ENCODE measurements at regions of chr2 and their contacts with region 1.

Region 1: DNA sequence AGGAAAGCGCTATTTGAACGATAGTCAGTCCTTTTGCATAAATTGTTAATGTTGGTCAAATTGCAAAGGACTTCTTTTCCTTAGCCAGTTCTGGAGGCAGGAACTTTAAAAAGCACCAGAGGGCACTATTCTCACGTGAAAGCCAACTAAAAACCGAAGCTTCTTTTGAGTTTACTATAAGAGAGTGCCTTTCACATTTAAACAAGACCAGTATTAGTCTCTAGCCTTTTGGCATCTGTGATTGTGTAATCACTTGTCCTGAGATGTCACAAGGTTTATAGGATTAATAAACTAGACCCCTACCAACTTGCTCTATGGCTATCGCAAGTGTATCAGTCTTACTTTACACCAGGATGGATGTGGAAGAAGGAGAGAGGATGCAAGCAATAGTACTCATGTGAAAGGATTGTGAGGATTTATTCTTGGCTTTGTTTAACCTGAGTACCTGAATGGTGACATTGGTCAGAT is 14.4 kb upstream of the STAT4 start:
- DNase-seq: peak in 6 of 9 donors; percentile 22 to 65 (median 52)
- ATAC-seq: peak; percentile 79
- H3K4me3 ChIP-seq: no peak overlapping the region
- H3K4me3 Mint-ChIP-seq: peak overlapping the region in 1 of 10 donors; percentile 50
- H3K27ac ChIP-seq: no peak overlapping the region
- H3K27ac Mint-ChIP-seq: peak overlapping the region in 2 of 9 donors; percentile 51 to 56
- H3K4me1 ChIP-seq: no peaks in the 10 kb centered on the region
- H3K4me1 Mint-ChIP-seq: peaks cover 2 to 18% (median 10%) of the 10 kb centered on the region in 7 donors
- H3K27me3 ChIP-seq: no peaks in the 10 kb centered on the region
- H3K27me3 Mint-ChIP-seq: peaks cover 0 to 8% (median 2%) of the 10 kb centered on the region in 5 donors

Region 2: DNA sequence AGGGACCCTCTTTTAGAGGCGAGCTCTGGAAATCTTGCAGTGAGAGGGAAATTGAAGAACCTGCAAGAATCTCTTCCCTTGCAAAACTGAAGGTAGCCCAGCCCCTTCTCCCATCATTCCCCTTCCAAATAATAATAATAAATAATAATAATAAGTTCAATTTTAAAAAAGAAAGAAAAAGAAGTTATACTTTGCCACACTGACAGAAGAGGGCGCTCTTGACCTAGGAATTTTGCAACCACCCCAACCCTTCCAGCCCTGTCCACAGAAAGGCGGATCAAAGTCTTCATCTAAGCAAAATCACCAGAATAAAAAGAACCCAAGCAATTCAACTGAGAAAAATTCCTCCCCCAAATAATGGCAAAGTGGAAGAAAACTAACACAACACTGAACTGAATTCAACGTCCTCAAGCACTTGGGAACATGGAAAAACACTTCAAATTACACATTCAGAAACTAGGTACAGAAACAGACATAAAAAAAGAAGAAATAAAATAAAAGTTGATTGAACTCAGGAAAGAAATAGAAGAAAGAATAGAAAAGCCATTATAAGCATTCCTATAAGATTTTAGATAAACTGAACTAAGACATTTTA is 383.5 kb before region 1 on chr2:
- CTCF ChIA-PET with region 1: no interaction called
- POLR2A ChIA-PET with region 1: no interaction called
- intact Hi-C with region 1: loop called in 1 of 2 experiments (anchors 2 kb)
- DNase-seq: peak in 8 of 9 donors; percentile 27 to 60 (median 46)
- ATAC-seq: peak; percentile 77
- H3K4me3 ChIP-seq: no peak overlapping the region
- H3K4me3 Mint-ChIP-seq: no peak overlapping the region
- H3K27ac ChIP-seq: no peak overlapping the region
- H3K27ac Mint-ChIP-seq: no peak overlapping the region
- H3K4me1 ChIP-seq: no peaks in the 10 kb centered on the region
- H3K4me1 Mint-ChIP-seq: peaks cover 0 to 11% (median 1%) of the 10 kb centered on the region in 7 donors
- H3K27me3 ChIP-seq: no peaks in the 10 kb centered on the region
- H3K27me3 Mint-ChIP-seq: peaks cover 0 to 8% (median 0%) of the 10 kb centered on the region in 5 donors

Region 3: GRCh38 chr2:191202881-191203397 is 37.7 kb after region 1 on chr2:
- CTCF ChIA-PET with region 1: interaction called, 4 read pairs
- POLR2A ChIA-PET with region 1: no interaction called
- intact Hi-C with region 1: loop called (anchors 5 kb)
- DNase-seq: no peak
- ATAC-seq: no peak
- H3K4me3 ChIP-seq: no peak overlapping the region
- H3K4me3 Mint-ChIP-seq: peak overlapping the region in 7 of 10 donors; percentile 6 to 62 (median 13)
- H3K27ac ChIP-seq: no peak overlapping the region
- H3K27ac Mint-ChIP-seq: peak overlapping the region in 5 of 9 donors; percentile 13 to 79 (median 37)
- H3K4me1 ChIP-seq: peaks cover 22 to 33% of the 10 kb centered on the region in 2 donors
- H3K4me1 Mint-ChIP-seq: peaks cover 25 to 54% (median 44%) of the 10 kb centered on the region in 7 donors
- H3K27me3 ChIP-seq: no peaks in the 10 kb centered on the region
- H3K27me3 Mint-ChIP-seq: no peaks in the 10 kb centered on the region

Region 4: DNA sequence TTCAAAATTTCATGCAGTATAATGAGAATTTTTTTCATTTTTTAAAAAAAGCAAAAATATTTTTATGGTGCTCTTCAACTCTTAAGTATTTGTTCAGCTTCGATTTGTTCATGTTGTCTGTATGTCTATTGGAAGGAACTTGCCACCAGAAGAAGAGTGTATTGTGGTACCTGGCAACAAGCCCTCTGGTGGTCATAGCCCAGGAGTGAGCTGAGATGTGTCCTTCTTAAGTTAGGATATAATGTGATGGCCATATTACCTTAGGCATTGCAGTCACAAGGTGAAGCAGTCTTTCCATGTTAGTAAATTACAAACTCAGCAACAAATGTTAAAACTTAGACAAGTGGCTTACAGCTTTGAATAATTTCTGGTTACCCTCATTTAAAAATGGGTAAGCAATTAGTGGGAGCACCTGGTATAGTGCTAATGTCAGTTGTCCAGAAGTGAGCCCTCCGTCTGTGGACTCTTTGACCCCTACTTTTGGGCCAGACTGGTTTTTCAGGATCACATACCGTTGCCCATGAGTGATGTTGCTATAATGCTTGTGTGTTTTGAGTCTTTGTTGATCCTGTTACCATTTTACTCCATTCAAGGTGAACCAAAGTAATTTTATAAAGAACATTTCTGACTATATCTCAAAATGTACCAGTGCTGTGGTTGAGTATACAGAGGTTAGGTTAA is 137.4 kb after region 1 on chr2:
- CTCF ChIA-PET with region 1: interaction called, 12 read pairs
- POLR2A ChIA-PET with region 1: no interaction called
- intact Hi-C with region 1: loop called (anchors 1 kb)
- DNase-seq: peak in 6 of 9 donors; percentile 4 to 27 (median 18)
- ATAC-seq: peak; percentile 54
- H3K4me3 ChIP-seq: no peak overlapping the region
- H3K4me3 Mint-ChIP-seq: no peak overlapping the region
- H3K27ac ChIP-seq: no peak overlapping the region
- H3K27ac Mint-ChIP-seq: peak overlapping the region in 1 of 9 donors; percentile 16
- H3K4me1 ChIP-seq: no peaks in the 10 kb centered on the region
- H3K4me1 Mint-ChIP-seq: no peaks in the 10 kb centered on the region
- H3K27me3 ChIP-seq: no peaks in the 10 kb centered on the region
- H3K27me3 Mint-ChIP-seq: no peaks in the 10 kb centered on the region

Region 5: DNA sequence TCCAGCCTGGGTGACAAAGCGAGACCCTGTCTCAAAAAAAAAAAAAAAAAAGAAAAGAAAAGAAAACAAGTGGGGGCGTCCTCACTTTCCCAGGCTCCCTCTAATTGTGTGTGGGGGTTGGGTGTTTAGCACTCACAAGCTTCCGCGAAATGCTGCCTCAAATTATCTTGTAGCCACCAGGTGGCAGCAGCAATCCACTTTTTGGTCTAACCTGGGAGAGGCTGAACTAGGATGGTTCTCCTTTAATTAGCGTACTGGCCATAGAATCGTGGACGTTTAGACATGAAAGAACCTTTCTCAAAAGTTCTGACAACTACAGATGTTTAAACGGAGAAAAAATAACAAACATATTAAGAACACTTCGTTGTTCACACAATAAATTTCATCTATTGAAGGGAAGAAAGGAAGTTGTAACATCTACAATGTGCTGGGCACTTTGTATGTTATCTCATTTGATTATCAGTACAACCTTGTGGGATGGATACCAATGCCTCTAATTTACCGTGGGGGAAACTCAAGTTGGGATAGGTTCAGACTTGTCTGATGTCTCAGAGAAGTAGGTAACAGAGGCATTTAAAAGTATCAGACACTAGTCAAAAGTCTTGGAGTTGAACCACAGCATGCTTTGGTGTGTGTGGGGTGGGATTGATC is 390.0 kb after region 1 on chr2:
- CTCF ChIA-PET with region 1: interaction called, 3 read pairs
- POLR2A ChIA-PET with region 1: no interaction called
- intact Hi-C with region 1: loop called (anchors 1 kb)
- DNase-seq: peak; percentile 40 to 78 (median 66)
- ATAC-seq: peak; percentile 89
- H3K4me3 ChIP-seq: no peak overlapping the region
- H3K4me3 Mint-ChIP-seq: peak overlapping the region in 4 of 10 donors; percentile 23 to 64 (median 43)
- H3K27ac ChIP-seq: no peak overlapping the region
- H3K27ac Mint-ChIP-seq: no peak overlapping the region
- H3K4me1 ChIP-seq: no peaks in the 10 kb centered on the region
- H3K4me1 Mint-ChIP-seq: peaks cover 0 to 5% (median 3%) of the 10 kb centered on the region in 7 donors
- H3K27me3 ChIP-seq: no peaks in the 10 kb centered on the region
- H3K27me3 Mint-ChIP-seq: peaks cover 13 to 34% (median 18%) of the 10 kb centered on the region in 5 donors

Region 6: GRCh38 chr2:192162392-192163042 is 997.3 kb after region 1 on chr2:
- CTCF ChIA-PET with region 1: interaction called, 6 read pairs
- POLR2A ChIA-PET with region 1: no interaction called
- intact Hi-C with region 1: loop called (anchors 1 kb)
- DNase-seq: peak; percentile 7 to 70 (median 57)
- ATAC-seq: peak; percentile 82
- H3K4me3 ChIP-seq: no peak overlapping the region
- H3K4me3 Mint-ChIP-seq: peak overlapping the region in 7 of 10 donors; percentile 31 to 56 (median 44)
- H3K27ac ChIP-seq: no peak overlapping the region
- H3K27ac Mint-ChIP-seq: no peak overlapping the region
- H3K4me1 ChIP-seq: peaks cover 0 to 9% of the 10 kb centered on the region in 2 donors
- H3K4me1 Mint-ChIP-seq: peaks cover 8 to 22% (median 13%) of the 10 kb centered on the region in 7 donors
- H3K27me3 ChIP-seq: no peaks in the 10 kb centered on the region
- H3K27me3 Mint-ChIP-seq: peaks cover 8 to 18% (median 12%) of the 10 kb centered on the region in 5 donors

Measured in naive thymus-derived CD4-positive, alpha-beta T cell (primary cell).